ENCODE measurements at regions of chr3 and their contacts with region 1.

Region 1: GRCh38 chr3:68571321-68571720 is 361.0 kb downstream of the TAFA4 start:
- DNase-seq: no peak
- H3K4me3 ChIP-seq: no peak overlapping the region
- H3K27me3 ChIP-seq: no peaks in the 10 kb centered on the region
- CTCF ChIP-seq: no peak

Region 2: GRCh38 chr3:68802111-68802870 is 231.0 kb after region 1 on chr3:
- CTCF ChIA-PET with region 1: no interaction called
- POLR2A ChIA-PET with region 1: interaction called, 12 read pairs
- DNase-seq: no peak
- H3K4me3 ChIP-seq: no peak overlapping the region
- H3K27me3 ChIP-seq: no peaks in the 10 kb centered on the region
- CTCF ChIP-seq: no peak

Measured in BJ (cell line).